ENCODE measurements at regions of chr1 and their contacts with region 1.

Region 1: GRCh38 chr1:111769517-111770146 is 13.9 kb downstream of the DDX20 start:
- DNase-seq: peak; percentile 53
- CTCF ChIP-seq: peak; percentile 78

Region 2: DNA sequence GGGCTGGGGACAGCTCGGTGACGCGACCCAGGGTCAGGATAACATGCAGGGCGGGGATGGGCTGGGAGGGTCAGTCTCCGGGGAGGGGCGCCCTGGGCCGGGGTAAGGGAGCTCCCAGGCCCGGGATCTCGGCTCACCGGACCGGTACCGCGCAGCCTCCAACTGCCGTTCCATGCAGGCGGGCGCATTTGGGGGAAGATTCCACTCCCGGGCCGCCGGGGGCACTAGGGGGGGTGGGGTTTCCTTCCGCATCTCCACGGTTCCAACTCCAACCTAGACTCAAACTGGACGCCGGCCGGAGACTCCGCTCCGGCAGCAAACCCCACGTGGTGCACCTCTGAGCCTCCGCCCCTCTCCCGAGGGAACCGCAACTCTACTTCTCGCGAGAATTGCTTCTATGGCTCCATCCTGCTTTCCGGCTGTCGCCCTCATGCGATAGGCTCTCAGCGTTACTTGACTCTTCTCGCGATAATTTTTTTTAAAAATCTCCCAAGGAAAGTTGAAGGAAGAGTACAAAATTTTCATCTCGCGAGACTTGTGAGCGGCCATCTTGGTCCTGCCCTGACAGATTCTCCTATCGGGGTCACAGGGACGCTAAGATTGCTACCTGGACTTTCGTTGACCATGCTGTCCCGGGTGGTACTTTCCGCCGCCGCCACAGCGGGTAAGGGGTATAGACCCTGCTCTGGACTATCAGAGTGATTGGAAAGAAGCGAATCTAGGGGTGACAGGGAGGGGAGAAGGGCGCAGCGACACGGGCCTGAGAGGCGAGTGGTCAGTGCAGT is 320.5 kb before region 1 on chr1 and contains the starts of genes ATP5PB and WDR77:
- CTCF ChIA-PET with region 1: interaction called, 11 read pairs
- POLR2A ChIA-PET with region 1: no interaction called
- DNase-seq: peak; percentile 98
- CTCF ChIP-seq: no peak

Region 3: GRCh38 chr1:111481387-111482221 is 288.0 kb before region 1 on chr1:
- CTCF ChIA-PET with region 1: interaction called, 61 read pairs
- POLR2A ChIA-PET with region 1: no interaction called
- DNase-seq: peak; percentile 74
- CTCF ChIP-seq: peak; percentile 88

Region 4: GRCh38 chr1:111619635-111620440 is 149.8 kb before region 1 on chr1 and contains the start of gene RAP1A:
- CTCF ChIA-PET with region 1: no interaction called
- POLR2A ChIA-PET with region 1: no interaction called
- DNase-seq: peak; percentile 95
- CTCF ChIP-seq: no peak

Region 5: GRCh38 chr1:111719674-111720132 is 49.9 kb before region 1 on chr1:
- CTCF ChIA-PET with region 1: interaction called, 27 read pairs
- POLR2A ChIA-PET with region 1: no interaction called
- DNase-seq: no peak
- CTCF ChIP-seq: no peak

Region 6: DNA sequence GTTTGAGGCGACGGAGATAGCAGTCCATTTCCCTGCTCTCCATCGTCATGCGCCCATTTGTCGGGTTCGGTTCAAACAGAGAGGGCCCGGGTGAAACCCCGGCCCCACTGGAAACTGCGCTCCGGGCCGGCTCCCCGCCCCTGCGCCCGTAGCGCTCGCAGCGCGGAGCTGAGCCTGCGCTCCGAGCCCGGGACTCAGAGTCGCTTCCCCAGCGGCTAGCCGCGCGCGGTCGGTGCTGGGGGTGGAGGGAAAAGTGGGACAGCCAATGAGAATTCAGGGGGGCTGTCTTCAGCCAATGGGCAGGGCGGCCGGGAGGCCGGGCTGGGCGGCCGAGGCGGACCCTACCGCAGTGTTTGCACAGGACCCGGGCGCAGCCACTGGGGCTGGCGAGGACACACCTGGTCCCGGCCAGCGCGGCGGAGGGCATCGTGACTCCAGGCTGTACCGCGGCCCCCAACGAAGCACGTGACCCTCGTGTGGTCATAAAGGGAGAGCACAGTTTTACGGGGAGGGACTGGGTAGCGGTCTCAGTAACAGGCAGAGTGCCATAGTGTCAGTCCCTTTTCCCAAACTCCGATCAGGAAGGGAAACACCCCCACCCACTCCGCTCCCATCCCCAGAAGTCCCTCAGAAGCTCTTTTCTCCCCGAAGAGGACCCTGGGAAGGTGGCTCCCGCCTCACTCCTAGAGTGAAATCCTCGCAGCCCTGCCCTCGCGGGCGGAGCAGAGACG is 30.3 kb before region 1 on chr1 and contains the start of gene INKA2:
- CTCF ChIA-PET with region 1: interaction called, 22 read pairs
- POLR2A ChIA-PET with region 1: no interaction called
- DNase-seq: peak; percentile 94
- CTCF ChIP-seq: no peak

Region 7: GRCh38 chr1:111755331-111756123 is 14.1 kb before region 1 on chr1 and contains the start of gene DDX20:
- CTCF ChIA-PET with region 1: interaction called, 56 read pairs
- POLR2A ChIA-PET with region 1: no interaction called
- DNase-seq: peak; percentile 98
- CTCF ChIP-seq: peak; percentile 91